Thyroid gland (tissue), 4 donors: ENCODE measurements at regions of chr11 and their contacts with region 1.

Region 1: GRCh38 chr11:83819933-83820549 is 533.9 kb upstream of the CCDC90B start:
- DNase-seq: peak; percentile 10 to 16
- H3K4me3 ChIP-seq: no peak overlapping the region
- H3K27ac ChIP-seq: no peak overlapping the region
- H3K4me1 ChIP-seq: no peaks in the 10 kb centered on the region
- H3K27me3 ChIP-seq: no peaks in the 10 kb centered on the region
- CTCF ChIP-seq: peak; percentile 22 to 91 (median 62)
- POLR2A ChIP-seq: no peak

Region 2: DNA sequence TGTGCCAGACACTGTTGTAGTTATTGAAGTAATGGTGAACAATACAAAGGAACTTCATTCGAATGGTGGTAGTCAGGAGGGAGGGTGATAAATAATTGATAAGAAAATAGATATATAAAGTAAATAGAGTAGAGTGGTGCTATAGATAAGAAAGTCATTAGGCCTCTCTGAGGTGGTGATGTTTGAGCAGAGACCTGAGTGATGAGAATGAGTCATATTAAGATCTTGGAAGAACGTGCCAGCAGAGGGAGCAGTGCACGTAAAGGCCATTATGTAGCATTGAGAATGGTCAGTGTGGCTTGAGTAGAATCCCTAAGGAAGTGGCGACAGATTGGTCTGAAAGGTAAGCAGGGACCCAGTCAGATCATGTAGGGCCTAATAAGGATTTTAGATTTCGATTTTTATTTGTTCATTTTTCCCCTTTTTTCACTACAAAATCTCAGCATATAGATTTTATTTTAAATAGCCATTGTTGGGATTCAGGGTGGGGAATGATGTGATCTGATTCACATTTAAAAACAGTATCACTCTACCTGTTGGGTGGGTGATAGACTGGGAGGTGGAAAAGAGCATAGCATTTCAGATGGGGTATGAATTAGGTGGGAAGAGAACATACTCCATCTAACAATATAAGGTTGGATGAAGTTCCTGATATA is 578.6 kb before region 1 on chr11:
- intact Hi-C with region 1: loop called (anchors 10 kb)
- DNase-seq: peak; percentile 67 to 72
- H3K4me3 ChIP-seq: no peak overlapping the region
- H3K27ac ChIP-seq: no peak overlapping the region
- H3K4me1 ChIP-seq: no peaks in the 10 kb centered on the region
- H3K27me3 ChIP-seq: no peaks in the 10 kb centered on the region
- CTCF ChIP-seq: peak in 5 of 6 experiments; percentile 13 to 68 (median 51)
- POLR2A ChIP-seq: no peak

Region 3: DNA sequence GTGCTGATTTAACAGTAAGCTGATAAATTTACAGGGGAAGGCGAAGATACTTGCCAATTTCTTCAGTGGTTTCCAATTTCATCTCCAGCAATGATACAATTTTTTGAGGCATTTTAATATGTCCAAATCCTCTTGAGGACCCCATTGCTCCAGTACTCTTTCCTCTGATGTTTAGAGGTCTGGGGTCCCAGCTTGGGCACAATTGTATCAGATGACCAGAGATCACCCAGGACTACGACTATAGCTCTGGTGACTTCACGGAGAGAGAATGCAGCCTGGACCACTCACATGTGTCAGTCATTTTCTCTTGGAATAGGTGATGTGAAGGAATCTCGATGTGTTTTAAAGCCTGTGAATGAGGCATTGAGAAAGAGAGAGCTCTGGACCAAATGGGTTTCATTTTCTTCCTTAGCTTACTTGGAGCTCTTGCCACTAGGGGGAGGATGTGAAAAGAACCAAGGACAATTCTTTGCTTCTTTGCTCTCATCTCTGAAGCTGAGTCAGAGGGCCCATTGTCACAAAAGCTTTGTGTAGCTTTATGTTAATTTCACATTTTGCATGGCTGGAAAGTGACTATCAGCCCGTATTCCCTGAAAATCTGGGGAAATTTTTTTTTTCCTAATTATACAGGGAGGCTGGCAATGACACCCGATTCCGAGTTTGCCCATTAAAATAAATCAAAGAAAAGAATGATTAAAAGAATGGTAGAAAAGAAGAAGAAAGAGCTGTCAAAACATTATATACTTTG is 527.2 kb before region 1 on chr11:
- intact Hi-C with region 1: loop called (anchors 10 kb)
- DNase-seq: peak; percentile 11 to 20
- H3K4me3 ChIP-seq: no peak overlapping the region
- H3K27ac ChIP-seq: no peak overlapping the region
- H3K4me1 ChIP-seq: no peaks in the 10 kb centered on the region
- H3K27me3 ChIP-seq: no peaks in the 10 kb centered on the region
- CTCF ChIP-seq: peak; percentile 54 to 83 (median 76)
- POLR2A ChIP-seq: no peak